Activated CD8-positive, alpha-beta T cell treated with anti-CD3 and anti-CD28 coated beads, Interleukin-2, amount 10 ng/mL, durations not matched to agents 7 days and 5 days (primary cell): ENCODE measurements at regions of chr6 and their contacts with region 1.

Region 1: DNA sequence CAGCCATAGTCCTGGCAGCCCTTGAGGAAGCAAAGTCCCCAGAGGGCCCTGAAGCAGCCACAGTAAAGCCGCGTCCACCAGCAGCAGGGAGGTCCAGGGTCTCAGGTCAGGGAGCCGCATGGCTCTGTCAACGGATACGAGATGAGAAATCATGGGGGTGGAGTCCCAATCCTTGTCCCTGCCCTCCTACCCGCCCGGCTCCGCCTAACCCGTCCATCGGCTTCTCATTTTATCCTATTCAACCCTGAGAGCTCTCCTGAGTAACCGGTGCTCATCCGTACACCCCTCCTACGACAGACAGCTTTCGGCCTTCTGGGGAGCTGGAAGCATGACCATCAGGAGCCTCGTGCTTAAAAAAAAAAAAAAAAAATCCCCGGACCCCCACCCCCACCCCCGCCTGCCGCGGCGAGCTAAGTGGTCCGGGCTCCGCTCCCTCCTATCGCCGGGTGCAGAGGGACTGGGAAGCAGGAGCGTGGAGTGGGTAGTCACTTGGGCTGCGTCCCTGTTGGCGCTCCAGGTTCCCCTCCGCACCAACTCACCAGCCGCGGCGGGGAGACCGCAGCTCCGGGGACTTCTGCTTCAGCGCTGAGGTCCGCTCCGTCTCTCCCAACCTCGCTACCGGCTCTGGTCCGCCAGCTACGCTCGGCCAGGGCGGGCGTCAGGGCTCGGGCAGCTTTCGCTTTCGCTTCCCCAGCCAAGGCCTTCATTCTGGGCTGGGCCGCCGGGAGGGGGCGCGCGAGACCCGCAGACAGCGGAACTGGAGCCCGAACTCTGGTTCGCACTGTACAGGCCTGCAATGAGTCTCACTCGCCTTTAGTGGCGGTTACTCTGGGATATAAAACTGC is at the start of gene TAP2:
- DNase-seq: peak; percentile 98
- ATAC-seq: peak; percentile 85
- H3K4me3 Mint-ChIP-seq: peak within 1 kb of the TSS; percentile 82
- H3K27ac Mint-ChIP-seq: peak within 1 kb of the TSS; percentile 99
- H3K4me1 Mint-ChIP-seq: peaks cover 80% of the 10 kb centered on the region
- H3K27me3 Mint-ChIP-seq: no peaks in the 10 kb centered on the region
- total RNA-seq, gene TAP2: 145 to 159 TPM

Region 2: DNA sequence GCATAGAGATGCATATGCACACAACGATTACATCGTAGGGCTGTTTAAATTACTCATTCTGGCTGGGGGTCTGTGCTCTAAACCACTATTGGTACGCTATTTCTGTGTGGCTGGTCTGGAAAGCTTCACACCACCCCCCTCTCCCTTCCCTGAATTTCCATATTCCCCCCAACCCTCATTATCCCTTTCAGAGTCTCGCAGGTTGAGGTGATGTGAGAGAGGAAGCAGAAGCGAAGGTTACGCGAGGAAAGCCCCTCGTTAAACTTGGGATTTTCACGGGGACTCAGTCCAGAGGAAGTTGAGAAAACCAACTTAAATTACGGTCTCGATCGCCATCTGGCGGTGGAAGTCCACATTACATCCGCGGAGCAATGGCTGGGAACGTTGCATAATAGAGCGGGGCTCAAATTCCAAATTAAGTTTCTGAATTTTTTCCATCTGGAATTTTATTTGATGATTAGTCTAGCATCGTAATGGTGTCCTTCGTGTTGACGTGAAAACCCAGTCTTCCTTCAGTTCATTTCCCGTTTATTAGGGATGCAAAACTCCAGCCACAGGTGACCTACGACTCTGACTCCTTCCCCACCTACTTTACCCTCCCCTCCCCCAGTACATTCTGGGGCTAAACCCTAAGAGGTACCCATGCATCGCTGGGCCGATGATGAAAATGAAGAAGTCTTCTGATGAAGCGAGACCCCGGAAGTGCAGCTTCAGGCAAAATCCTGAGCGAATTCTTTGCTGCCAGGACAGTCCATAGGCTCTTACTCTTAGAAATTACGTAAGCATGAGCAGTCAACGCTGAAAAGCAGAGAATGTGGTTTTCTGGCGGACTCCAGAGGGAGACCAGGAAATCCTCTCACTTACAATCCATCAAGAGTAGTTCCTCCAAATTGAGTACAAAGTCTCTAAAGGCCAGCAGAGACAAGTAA is 41.2 kb before region 1 on chr6:
- CTCF ChIA-PET with region 1: interaction called, 11 read pairs
- POLR2A ChIA-PET with region 1: no interaction called
- DNase-seq: peak; percentile 83
- ATAC-seq: peak; percentile 73
- H3K4me3 Mint-ChIP-seq: peak overlapping the region; percentile 57
- H3K27ac Mint-ChIP-seq: peak overlapping the region; percentile 33
- H3K4me1 Mint-ChIP-seq: peaks cover 37% of the 10 kb centered on the region
- H3K27me3 Mint-ChIP-seq: peaks cover 40% of the 10 kb centered on the region

Region 3: DNA sequence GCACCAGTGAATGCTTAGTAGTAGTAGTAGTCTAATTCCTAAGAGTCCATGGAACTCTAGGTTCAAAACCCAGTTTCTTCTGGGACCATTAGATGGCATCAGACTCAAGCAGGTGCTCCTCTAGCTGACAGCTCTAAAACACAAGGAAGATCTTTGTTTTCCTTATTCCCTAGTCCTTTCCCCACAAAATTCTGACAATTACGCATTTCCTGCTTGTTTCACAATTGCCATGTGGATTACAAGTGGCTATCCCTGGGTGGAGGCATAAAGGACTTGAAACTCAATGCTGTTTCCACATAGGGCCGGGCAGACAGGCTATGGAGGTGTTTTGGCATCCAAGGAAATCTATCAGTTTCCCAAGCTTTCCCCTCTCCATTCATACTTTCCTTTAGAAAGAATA is 12.4 kb before region 1 on chr6:
- CTCF ChIA-PET with region 1: interaction called, 62 read pairs
- POLR2A ChIA-PET with region 1: interaction called, 27 read pairs
- DNase-seq: no peak
- ATAC-seq: no peak
- H3K4me3 Mint-ChIP-seq: no peak overlapping the region
- H3K27ac Mint-ChIP-seq: no peak overlapping the region
- H3K4me1 Mint-ChIP-seq: peaks cover 15% of the 10 kb centered on the region
- H3K27me3 Mint-ChIP-seq: no peaks in the 10 kb centered on the region

Region 4: GRCh38 chr6:32879691-32880090 is 41.4 kb after region 1 on chr6:
- CTCF ChIA-PET with region 1: interaction called, 17 read pairs
- POLR2A ChIA-PET with region 1: interaction called, 3 read pairs
- DNase-seq: no peak
- ATAC-seq: no peak
- H3K4me3 Mint-ChIP-seq: no peak overlapping the region
- H3K27ac Mint-ChIP-seq: no peak overlapping the region
- H3K4me1 Mint-ChIP-seq: no peaks in the 10 kb centered on the region
- H3K27me3 Mint-ChIP-seq: no peaks in the 10 kb centered on the region

Region 5: DNA sequence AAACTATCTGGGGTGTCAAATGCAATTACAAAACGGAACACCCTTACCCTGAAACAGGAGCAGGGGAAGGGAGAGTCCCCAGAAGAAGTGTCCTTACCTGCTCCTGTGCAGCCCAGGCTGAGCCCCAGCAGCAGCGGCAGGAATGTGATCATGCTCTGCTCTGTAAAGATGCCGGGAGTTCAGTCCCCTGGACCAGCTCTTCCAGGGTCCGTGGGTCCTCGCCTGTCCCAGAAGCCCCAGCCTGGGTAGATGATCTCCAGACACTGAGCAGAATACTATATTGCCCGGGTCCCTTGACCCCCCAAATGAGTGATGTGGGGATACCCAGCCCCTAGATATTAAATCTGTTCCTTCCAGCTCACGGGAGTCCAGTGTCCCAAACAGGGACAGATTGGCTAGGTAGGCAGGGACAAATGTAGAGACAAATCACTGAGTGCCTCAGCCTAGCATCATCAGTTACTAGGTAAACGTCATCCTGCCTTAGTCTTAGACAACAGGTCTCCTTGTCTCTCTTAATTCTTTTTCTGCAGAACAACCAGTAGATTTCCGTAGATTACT is 102.4 kb after region 1 on chr6 and contains the start of gene HLA-DMB:
- CTCF ChIA-PET with region 1: interaction called, 32 read pairs
- POLR2A ChIA-PET with region 1: interaction called, 4 read pairs
- DNase-seq: peak; percentile 73
- ATAC-seq: peak; percentile 90
- H3K4me3 Mint-ChIP-seq: peak within 1 kb of the TSS; percentile 86
- H3K27ac Mint-ChIP-seq: peak within 1 kb of the TSS; percentile 97
- H3K4me1 Mint-ChIP-seq: peaks cover 69% of the 10 kb centered on the region
- H3K27me3 Mint-ChIP-seq: no peaks in the 10 kb centered on the region
- total RNA-seq, gene HLA-DMB: 14.4 to 14.7 TPM

Region 6: GRCh38 chr6:32952817-32953739 is 114.7 kb after region 1 on chr6 and contains the start of gene HLA-DMA:
- CTCF ChIA-PET with region 1: interaction called, 48 read pairs
- POLR2A ChIA-PET with region 1: interaction called, 5 read pairs
- DNase-seq: peak; percentile 85
- ATAC-seq: peak; percentile 98
- H3K4me3 Mint-ChIP-seq: peak within 1 kb of the TSS; percentile 77
- H3K27ac Mint-ChIP-seq: peak within 1 kb of the TSS; percentile 83
- H3K4me1 Mint-ChIP-seq: peaks cover 62% of the 10 kb centered on the region
- H3K27me3 Mint-ChIP-seq: no peaks in the 10 kb centered on the region
- total RNA-seq, gene HLA-DMA: 28.6 to 30.5 TPM

Region 7: DNA sequence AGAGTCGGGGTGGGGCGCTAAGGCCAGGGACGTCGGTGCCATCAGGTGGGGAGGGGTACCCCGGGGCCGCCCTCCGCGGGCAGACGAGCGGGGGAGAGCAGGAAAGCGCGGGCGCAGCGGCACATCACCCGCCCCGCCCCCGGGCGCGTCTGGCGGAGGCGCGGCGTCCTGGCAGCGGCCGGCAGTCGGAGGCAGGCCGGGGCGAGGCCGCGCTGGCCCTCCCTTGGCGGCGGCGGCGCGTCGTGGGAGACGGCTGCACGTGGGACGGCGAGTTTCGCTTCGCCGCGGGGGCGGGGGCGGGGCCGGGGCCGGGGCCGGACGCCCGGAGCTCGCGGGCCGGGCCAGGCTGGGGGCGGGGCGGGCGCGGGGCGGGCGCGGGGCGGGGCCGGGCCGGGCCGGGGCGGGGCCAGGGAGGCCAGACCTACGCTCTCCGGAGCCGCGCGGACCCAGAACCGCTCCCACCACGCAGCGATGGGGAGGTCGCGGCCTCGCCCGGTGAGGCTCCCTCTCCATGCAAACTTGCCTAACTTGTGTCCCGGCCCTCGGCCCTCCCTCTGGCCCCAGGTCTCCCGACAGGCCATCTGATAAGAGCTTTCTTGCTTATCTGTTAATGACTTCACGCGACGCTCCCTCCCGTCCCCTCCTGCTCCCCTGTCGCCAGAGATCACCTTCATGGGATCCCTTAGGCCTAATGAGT is 795.3 kb after region 1 on chr6:
- CTCF ChIA-PET with region 1: no interaction called
- POLR2A ChIA-PET with region 1: no interaction called
- DNase-seq: peak; percentile 66
- ATAC-seq: peak; percentile 85
- H3K4me3 Mint-ChIP-seq: peak overlapping the region; percentile 73
- H3K27ac Mint-ChIP-seq: peak overlapping the region; percentile 46
- H3K4me1 Mint-ChIP-seq: peaks cover 61% of the 10 kb centered on the region
- H3K27me3 Mint-ChIP-seq: no peaks in the 10 kb centered on the region